H1 (cell line): ENCODE measurements at regions of chr4 and their contacts with region 1.

Region 1: DNA sequence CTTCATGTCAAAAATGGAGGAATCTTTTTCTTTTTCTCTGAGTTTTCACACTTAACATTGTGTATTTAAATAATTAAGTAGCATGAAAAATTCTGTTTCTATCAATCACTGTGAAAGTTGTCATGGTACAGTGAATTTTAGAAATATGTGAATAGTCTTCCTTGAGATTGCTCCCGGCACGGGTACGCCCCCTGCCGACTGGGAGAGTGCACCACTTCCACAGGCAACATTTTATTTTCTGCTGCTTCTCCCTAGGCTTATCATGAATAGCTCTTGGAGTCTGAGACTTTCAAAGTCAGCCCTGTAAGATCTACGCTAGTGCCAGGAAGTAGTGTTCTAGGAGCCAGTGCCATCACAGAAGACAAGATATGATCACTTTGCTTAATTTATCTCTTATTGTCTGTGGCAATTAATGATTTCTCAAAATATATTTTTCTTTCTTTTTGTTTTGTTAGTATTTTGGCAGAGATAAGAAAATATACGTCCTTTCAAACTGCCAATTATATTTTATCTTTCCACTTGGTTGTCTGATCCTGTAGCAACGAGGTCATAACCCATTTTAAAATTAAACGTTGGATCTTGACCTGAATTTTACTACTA is 763.8 kb upstream of the AADAT start:
- DNase-seq: peak; percentile 27 to 69
- H3K4me3 ChIP-seq: no peak overlapping the region
- H3K27ac ChIP-seq: no peak overlapping the region
- H3K4me1 ChIP-seq: no peaks in the 10 kb centered on the region
- H3K27me3 ChIP-seq: no peaks in the 10 kb centered on the region
- CTCF ChIP-seq: peak; percentile 73 to 85 (median 83)
- EP300 ChIP-seq: no peak
- POLR2A ChIP-seq: no peak
- RAD21 ChIP-seq: peak; percentile 80 to 81

Region 2: GRCh38 chr4:170529748-170530722 is 323.5 kb before region 1 on chr4:
- CTCF ChIA-PET with region 1: no interaction called
- POLR2A ChIA-PET with region 1: no interaction called
- DNase-seq: no peak
- H3K4me3 ChIP-seq: no peak overlapping the region
- H3K27ac ChIP-seq: no peak overlapping the region
- H3K4me1 ChIP-seq: no peaks in the 10 kb centered on the region
- H3K27me3 ChIP-seq: no peaks in the 10 kb centered on the region
- CTCF ChIP-seq: no peak
- EP300 ChIP-seq: no peak
- POLR2A ChIP-seq: no peak
- RAD21 ChIP-seq: no peak

Region 3: GRCh38 chr4:170589597-170590191 is 263.8 kb before region 1 on chr4:
- CTCF ChIA-PET with region 1: interaction called, 22 read pairs
- POLR2A ChIA-PET with region 1: no interaction called
- DNase-seq: no peak
- H3K4me3 ChIP-seq: no peak overlapping the region
- H3K27ac ChIP-seq: no peak overlapping the region
- H3K4me1 ChIP-seq: no peaks in the 10 kb centered on the region
- H3K27me3 ChIP-seq: no peaks in the 10 kb centered on the region
- CTCF ChIP-seq: peak in 2 of 3 experiments; percentile 62 to 69; a peak in 3 of 4 replicates
- EP300 ChIP-seq: no peak
- POLR2A ChIP-seq: no peak
- RAD21 ChIP-seq: peak; percentile 66 to 68

Region 4: GRCh38 chr4:170875870-170876269 is 22.3 kb after region 1 on chr4:
- CTCF ChIA-PET with region 1: interaction called, 15 read pairs
- POLR2A ChIA-PET with region 1: no interaction called
- DNase-seq: no peak
- H3K4me3 ChIP-seq: no peak overlapping the region
- H3K27ac ChIP-seq: no peak overlapping the region
- H3K4me1 ChIP-seq: no peaks in the 10 kb centered on the region
- H3K27me3 ChIP-seq: no peaks in the 10 kb centered on the region
- CTCF ChIP-seq: peak in 1 of 3 experiments; percentile 9; a peak in 1 of 4 replicates
- EP300 ChIP-seq: no peak
- POLR2A ChIP-seq: no peak
- RAD21 ChIP-seq: peak; percentile 32 to 44; a peak in 3 of 4 replicates

Region 5: GRCh38 chr4:171181099-171181498 is 327.6 kb after region 1 on chr4:
- CTCF ChIA-PET with region 1: no interaction called
- POLR2A ChIA-PET with region 1: no interaction called
- DNase-seq: no peak
- H3K4me3 ChIP-seq: no peak overlapping the region
- H3K27ac ChIP-seq: no peak overlapping the region
- H3K4me1 ChIP-seq: no peaks in the 10 kb centered on the region
- H3K27me3 ChIP-seq: no peaks in the 10 kb centered on the region
- CTCF ChIP-seq: no peak
- EP300 ChIP-seq: no peak
- POLR2A ChIP-seq: no peak
- RAD21 ChIP-seq: no peak